Naive thymus-derived CD4-positive, alpha-beta T cell (primary cell): ENCODE measurements at regions of chr18 and their contacts with region 1.

Region 1: GRCh38 chr18:658001-658946 is 821 bp downstream of the TYMS start:
- DNase-seq: peak in 3 of 9 donors; percentile 20 to 78 (median 31)
- ATAC-seq: peak; percentile 68
- H3K4me3 ChIP-seq: peak overlapping the region; percentile 79
- H3K4me3 Mint-ChIP-seq: peak overlapping the region; percentile 81 to 96 (median 83)
- H3K27ac ChIP-seq: no peak overlapping the region
- H3K27ac Mint-ChIP-seq: peak overlapping the region in 1 of 9 donors; percentile 94
- H3K4me1 ChIP-seq: peaks cover 0 to 5% of the 10 kb centered on the region in 2 donors
- H3K4me1 Mint-ChIP-seq: peaks cover 0 to 50% (median 10%) of the 10 kb centered on the region in 7 donors
- H3K27me3 ChIP-seq: peaks cover 0 to 5% of the 10 kb centered on the region in 2 donors
- H3K27me3 Mint-ChIP-seq: peaks cover 0 to 43% (median 35%) of the 10 kb centered on the region in 5 donors

Region 2: DNA sequence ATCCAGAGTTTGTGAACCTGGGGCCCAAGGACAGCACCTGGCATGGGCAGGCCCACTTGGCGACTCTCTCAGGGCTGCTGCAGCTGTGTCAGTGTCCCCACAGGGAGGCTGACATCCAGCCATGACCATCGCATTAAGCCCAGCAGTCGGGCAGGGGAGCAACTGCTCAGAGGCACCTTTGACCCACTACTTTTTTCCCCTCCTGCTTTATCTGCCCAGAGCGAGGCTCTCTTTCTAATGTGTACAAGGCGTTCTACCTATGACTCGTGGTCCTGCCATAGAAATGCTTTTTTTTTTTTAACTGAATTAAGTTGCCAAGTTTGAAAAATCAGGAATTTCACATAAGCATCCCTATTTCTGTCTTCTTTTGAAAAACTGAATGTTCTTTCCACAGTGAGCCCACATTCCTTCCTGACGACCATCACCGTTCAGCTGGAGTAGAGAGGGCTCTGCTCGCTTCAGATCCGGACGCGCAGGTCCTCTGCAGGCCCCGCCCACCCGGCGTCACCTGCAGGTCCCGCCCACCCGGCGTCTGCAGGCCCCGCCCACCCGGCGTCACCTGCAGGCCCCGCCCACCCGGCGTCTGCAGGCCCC is 61.9 kb before region 1 on chr18:
- CTCF ChIA-PET with region 1: no interaction called
- POLR2A ChIA-PET with region 1: no interaction called
- intact Hi-C with region 1: loop called in 1 of 2 experiments (anchors 2 kb)
- DNase-seq: peak in 1 of 9 donors; percentile 52
- ATAC-seq: peak; percentile 75
- H3K4me3 ChIP-seq: no peak overlapping the region
- H3K4me3 Mint-ChIP-seq: peak overlapping the region in 8 of 10 donors; percentile 55 to 64 (median 56)
- H3K27ac ChIP-seq: peak overlapping the region; percentile 33
- H3K27ac Mint-ChIP-seq: peak overlapping the region in 7 of 9 donors; percentile 8 to 83 (median 73)
- H3K4me1 ChIP-seq: peaks cover 4 to 5% of the 10 kb centered on the region in 2 donors
- H3K4me1 Mint-ChIP-seq: peaks cover 0 to 17% (median 12%) of the 10 kb centered on the region in 7 donors
- H3K27me3 ChIP-seq: peaks cover 0 to 5% of the 10 kb centered on the region in 2 donors
- H3K27me3 Mint-ChIP-seq: peaks cover 21 to 48% (median 34%) of the 10 kb centered on the region in 5 donors

Region 3: DNA sequence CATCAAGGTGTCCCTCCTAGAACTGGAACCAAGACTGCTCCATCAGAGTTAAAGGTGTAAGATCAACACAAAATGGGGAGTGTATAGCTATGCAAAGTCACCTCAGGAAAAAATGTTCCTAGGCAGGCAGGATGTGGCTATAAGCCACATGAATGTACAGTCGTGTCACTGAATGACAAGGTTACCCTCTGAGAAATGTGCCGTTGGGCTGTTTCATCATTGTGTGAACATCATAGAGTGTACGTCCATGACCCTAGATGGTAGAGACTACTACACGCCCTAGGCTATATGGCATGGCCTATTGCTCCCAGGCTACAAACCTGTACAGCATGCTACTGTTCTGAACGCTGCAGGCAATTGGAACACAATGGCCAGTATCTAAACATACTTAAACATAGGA is 23.7 kb after region 1 on chr18:
- CTCF ChIA-PET with region 1: no interaction called
- POLR2A ChIA-PET with region 1: no interaction called
- intact Hi-C with region 1: loop called in 1 of 2 experiments (anchors 2 kb)
- DNase-seq: peak in 8 of 9 donors; percentile 46 to 74 (median 60)
- ATAC-seq: peak; percentile 93
- H3K4me3 ChIP-seq: no peak overlapping the region
- H3K4me3 Mint-ChIP-seq: peak overlapping the region in 9 of 10 donors; percentile 8 to 57 (median 43)
- H3K27ac ChIP-seq: no peak overlapping the region
- H3K27ac Mint-ChIP-seq: peak overlapping the region in 7 of 9 donors; percentile 17 to 90 (median 84)
- H3K4me1 ChIP-seq: peaks cover 10 to 11% of the 10 kb centered on the region in 2 donors
- H3K4me1 Mint-ChIP-seq: peaks cover 10 to 28% (median 16%) of the 10 kb centered on the region in 7 donors
- H3K27me3 ChIP-seq: no peaks in the 10 kb centered on the region
- H3K27me3 Mint-ChIP-seq: no peaks in the 10 kb centered on the region